PC-3 (cell line): ENCODE measurements at regions of chr22 and their contacts with region 1.

Region 1: DNA sequence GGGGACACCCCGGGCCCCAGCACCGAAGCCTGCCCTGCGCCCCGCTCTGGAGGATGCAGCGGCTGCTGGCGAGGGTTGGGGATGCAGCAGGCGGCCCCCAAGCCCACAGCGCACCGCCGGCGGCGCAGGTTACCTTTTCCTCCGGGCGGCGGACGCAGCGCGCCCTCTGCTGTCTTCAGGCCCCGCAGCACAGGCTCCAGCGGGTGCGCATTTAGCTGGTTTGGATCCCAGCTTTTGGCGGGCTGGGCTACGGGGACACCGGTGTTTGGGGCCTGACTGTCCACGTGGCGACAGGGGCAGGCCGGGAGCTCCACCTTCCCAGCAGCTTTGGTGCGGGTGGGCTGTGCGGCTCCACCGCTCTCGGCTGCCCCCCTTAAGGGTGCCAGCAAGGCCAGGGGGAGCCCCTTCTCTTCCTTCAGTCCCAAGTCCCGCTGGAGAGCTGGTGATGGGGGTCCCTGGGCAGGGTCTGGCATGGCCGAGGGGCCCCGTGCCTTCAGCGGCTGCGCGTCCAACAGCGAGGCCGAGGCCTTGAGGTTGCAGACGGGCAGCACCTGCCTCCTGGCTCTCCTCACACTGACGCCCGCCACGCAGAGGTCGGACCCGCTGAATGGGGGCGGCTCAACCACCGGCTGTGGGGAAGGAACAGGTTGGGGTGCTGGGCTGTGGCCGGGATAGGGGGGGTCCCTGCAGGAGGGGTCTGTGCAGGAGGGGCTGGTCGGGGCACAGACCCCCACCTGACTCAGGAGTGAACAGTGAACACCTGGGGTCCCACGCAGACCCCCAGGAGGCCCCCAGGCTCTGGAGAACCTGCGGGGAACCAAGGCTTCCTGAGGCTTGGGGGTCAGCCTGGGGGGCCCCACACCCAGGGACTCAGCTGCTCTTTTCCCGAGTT is 18.0 kb upstream of the IL17REL start:
- DNase-seq: peak; percentile 80
- ATAC-seq: peak; percentile 79
- H3K4me3 ChIP-seq: peak overlapping the region; percentile 56; the same call in 1 of the 2 replicates
- H3K27ac ChIP-seq: no peak overlapping the region
- H3K4me1 ChIP-seq: peaks cover 8% of the 10 kb centered on the region
- H3K27me3 ChIP-seq: no peaks in the 10 kb centered on the region
- CTCF ChIP-seq: peak; percentile 67

Region 2: GRCh38 chr22:49930739-49931412 is 99.7 kb before region 1 on chr22:
- CTCF ChIA-PET with region 1: interaction called, 15 read pairs
- POLR2A ChIA-PET with region 1: no interaction called
- intact Hi-C with region 1: loop called (anchors 1 kb)
- DNase-seq: peak; percentile 85
- ATAC-seq: peak; percentile 76
- H3K4me3 ChIP-seq: no peak overlapping the region
- H3K27ac ChIP-seq: no peak overlapping the region
- H3K4me1 ChIP-seq: peaks cover 18% of the 10 kb centered on the region
- H3K27me3 ChIP-seq: no peaks in the 10 kb centered on the region
- CTCF ChIP-seq: peak; percentile 78

Region 3: DNA sequence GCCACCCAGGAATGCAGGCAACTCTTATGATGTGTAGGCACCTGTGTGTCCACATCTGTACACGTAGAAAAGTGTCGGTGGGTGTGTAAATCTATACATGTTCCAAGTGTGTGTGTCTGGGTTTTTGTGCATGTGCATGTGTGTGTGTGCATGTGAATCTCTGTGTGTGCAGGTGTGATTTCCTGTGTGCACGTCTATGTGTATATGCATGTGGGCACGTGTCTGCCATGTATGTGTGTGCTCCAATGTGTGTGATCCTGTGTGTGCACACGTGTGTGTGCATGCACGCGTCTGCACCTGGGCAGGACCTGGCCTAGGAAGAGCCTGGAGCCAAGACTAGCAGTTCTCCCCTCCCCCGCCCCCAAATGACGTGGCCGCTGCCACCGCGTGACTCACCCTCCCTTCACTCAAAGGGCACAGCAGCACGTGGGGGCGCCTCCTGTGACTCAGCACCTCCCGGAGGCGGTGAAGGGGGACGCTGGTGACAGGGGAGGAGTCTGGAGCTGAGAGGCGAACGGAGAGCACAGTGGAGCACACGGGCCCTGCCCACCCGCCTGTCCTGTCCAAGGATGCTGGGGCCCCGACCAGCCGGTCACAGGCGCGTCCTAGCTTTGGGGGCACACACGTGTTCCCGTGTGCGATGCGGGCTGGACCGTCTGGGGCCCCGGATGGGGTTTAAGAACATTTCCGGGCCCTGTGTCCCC is 59.9 kb before region 1 on chr22:
- CTCF ChIA-PET with region 1: interaction called, 4 read pairs
- POLR2A ChIA-PET with region 1: no interaction called
- intact Hi-C with region 1: loop called (anchors 10 kb)
- DNase-seq: peak; percentile 96
- ATAC-seq: peak; percentile 92
- H3K4me3 ChIP-seq: peak overlapping the region; percentile 65
- H3K27ac ChIP-seq: peak overlapping the region; percentile 84
- H3K4me1 ChIP-seq: peaks cover 11% of the 10 kb centered on the region
- H3K27me3 ChIP-seq: no peaks in the 10 kb centered on the region
- CTCF ChIP-seq: no peak

Region 4: DNA sequence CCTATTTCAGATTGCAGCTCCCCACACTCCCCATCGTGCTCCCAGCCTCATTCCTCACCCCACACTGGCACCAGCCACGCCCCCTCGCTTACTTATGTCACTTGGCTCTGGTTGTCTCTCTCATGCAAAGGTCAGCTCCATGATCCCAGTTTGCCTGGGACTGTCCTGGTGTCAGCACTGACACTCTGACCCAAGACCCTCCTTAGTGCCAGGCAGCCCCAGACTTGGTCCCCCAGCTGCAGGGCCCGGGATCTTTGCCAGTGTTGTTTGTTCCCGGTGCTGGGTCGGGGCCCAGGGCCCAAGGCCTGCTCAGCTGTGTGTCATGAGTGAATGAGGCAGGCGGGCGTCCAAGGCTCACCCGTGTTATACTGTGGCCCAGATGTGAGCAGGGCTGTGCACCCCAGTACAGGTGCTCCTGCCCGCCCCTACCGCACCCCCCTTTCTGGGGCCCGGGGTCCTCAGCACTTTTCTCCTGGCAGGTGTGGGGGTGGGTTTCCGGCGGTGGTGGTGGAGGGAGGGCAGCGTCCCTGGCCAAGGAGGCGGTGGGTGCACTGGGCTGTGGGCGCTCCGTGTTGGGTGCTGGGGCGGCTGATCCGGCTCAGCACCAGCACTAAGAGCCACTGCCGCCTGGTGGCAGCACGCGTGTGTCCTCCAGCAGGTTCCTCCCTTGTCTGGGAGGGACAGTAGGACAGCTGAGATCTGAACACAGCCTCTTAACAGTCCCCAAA is 37.5 kb before region 1 on chr22:
- CTCF ChIA-PET with region 1: interaction called, 4 read pairs
- POLR2A ChIA-PET with region 1: no interaction called
- intact Hi-C with region 1: loop called (anchors 2 kb)
- DNase-seq: peak; percentile 60
- ATAC-seq: peak; percentile 90
- H3K4me3 ChIP-seq: no peak overlapping the region
- H3K27ac ChIP-seq: no peak overlapping the region
- H3K4me1 ChIP-seq: no peaks in the 10 kb centered on the region
- H3K27me3 ChIP-seq: no peaks in the 10 kb centered on the region
- CTCF ChIP-seq: peak; percentile 71

Region 5: GRCh38 chr22:50061824-50062355 is 31.3 kb after region 1 on chr22:
- CTCF ChIA-PET with region 1: no interaction called
- POLR2A ChIA-PET with region 1: interaction called, 13 read pairs
- intact Hi-C with region 1: no loop called
- DNase-seq: no peak
- ATAC-seq: no peak
- H3K4me3 ChIP-seq: no peak overlapping the region
- H3K27ac ChIP-seq: no peak overlapping the region
- H3K4me1 ChIP-seq: no peaks in the 10 kb centered on the region
- H3K27me3 ChIP-seq: no peaks in the 10 kb centered on the region
- CTCF ChIP-seq: no peak